ENCODE measurements at regions of chr21 and their contacts with region 1.

Region 1: DNA sequence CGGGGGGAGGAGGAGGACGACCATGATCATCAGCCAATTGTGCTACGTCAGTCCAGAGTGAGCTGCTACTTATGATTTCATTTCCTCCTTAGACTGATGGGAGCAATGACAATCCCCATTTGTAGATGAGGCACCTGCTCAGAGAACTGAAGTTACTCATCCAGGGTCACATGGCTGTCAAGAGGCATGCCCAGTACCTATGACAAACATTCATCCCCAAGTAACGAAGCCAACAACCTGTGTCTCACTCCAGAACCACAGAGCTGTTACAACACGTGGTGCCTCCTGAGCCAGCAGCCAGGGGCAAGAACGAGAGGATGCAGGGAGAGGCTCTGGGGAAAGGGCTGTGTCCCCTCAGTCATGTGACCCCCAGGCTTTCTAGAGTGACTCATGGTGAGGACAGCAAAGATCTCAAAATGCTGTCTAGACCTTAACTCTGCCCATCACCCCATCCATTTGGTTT is 93.6 kb downstream of the SIM2 start:
- DNase-seq: no peak

Region 2: GRCh38 chr21:36664662-36664990 is 127.9 kb before region 1 on chr21:
- intact Hi-C with region 1: no loop called
- DNase-seq: no peak

Region 3: GRCh38 chr21:36835383-36835795 is 42.9 kb after region 1 on chr21:
- intact Hi-C with region 1: loop called (anchors 5 kb)
- DNase-seq: no peak

Region 4: GRCh38 chr21:38470762-38471161 is 1678.2 kb after region 1 on chr21:
- intact Hi-C with region 1: no loop called
- DNase-seq: no peak

Measured in cardiac septum (tissue), 1 donor.